Mammary epithelial cell (primary cell): ENCODE measurements at regions of chr17 and their contacts with region 1.

Region 1: GRCh38 chr17:47949136-47949759 is 7.9 kb downstream of the PNPO start:
- DNase-seq: peak; percentile 86
- H3K4me3 ChIP-seq: peak overlapping the region in 1 of 3 experiments; percentile 8
- H3K27ac ChIP-seq: peak overlapping the region; percentile 85
- H3K4me1 ChIP-seq: peaks cover 32% of the 10 kb centered on the region
- H3K27me3 ChIP-seq: no peaks in the 10 kb centered on the region
- CTCF ChIP-seq: peak; percentile 83 to 93

Region 2: GRCh38 chr17:47895856-47896671 is 53.2 kb before region 1 on chr17 and contains the start of gene SP2:
- CTCF ChIA-PET with region 1: interaction called, 5 read pairs
- dilution Hi-C with region 1: no loop called
- in situ Hi-C with region 1: no loop called
- intact Hi-C with region 1: loop called (anchors 1 kb)
- DNase-seq: peak; percentile 100
- H3K4me3 ChIP-seq: peak within 1 kb of the TSS; percentile 86 to 97 (median 91)
- H3K27ac ChIP-seq: peak within 1 kb of the TSS; percentile 85
- H3K4me1 ChIP-seq: peaks cover 29% of the 10 kb centered on the region
- H3K27me3 ChIP-seq: no peaks in the 10 kb centered on the region
- CTCF ChIP-seq: no peak
- total RNA-seq, gene SP2: 1.5 to 14.9 TPM

Region 3: DNA sequence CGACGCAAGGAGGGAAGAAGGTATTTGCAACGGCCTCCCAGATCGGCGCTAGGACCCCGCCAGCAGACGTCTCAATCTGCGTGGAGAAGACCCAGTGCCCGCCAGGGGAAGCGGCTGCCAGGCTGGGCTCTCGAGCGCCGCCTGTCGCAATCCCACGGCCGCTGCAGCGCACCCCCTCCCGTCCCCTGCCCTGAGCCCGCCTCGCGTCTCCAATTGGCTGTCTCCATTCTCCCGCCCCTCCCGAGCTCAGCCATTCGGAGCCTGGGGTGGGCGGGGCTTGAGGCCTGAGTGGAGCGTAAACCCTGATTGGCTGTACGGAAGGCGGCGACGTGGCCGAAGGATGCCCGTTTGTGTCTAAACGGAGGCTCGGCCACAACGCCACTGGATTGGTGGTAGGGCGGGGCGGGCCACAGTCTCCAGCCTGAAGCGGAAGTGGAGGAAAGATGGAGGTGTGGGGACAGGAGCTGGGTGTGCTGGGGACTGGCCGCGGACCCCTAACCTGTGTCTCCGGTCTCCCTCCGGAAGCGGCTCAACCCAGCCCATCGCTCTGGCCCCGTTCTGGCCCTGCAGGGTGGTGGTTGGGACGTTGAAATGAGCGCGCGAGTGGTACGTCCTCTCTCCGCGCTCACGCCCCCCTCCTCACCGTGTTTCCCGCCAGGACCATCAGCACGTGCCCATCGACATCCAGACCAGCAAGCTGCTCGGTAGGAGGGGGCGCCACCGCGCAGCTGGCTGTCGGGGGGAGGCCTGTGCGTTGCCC is 21.6 kb after region 1 on chr17 and contains the start of gene CDK5RAP3:
- CTCF ChIA-PET with region 1: interaction called, 14 read pairs
- dilution Hi-C with region 1: no loop called
- in situ Hi-C with region 1: no loop called
- intact Hi-C with region 1: loop called (anchors 1 kb)
- DNase-seq: peak; percentile 99
- H3K4me3 ChIP-seq: peak within 1 kb of the TSS; percentile 49 to 98 (median 78)
- H3K27ac ChIP-seq: peak within 1 kb of the TSS; percentile 60
- H3K4me1 ChIP-seq: peaks cover 27% of the 10 kb centered on the region
- H3K27me3 ChIP-seq: no peaks in the 10 kb centered on the region
- CTCF ChIP-seq: peak; percentile 72 to 93
- total RNA-seq, gene CDK5RAP3: 35.3 to 116 TPM

Region 4: DNA sequence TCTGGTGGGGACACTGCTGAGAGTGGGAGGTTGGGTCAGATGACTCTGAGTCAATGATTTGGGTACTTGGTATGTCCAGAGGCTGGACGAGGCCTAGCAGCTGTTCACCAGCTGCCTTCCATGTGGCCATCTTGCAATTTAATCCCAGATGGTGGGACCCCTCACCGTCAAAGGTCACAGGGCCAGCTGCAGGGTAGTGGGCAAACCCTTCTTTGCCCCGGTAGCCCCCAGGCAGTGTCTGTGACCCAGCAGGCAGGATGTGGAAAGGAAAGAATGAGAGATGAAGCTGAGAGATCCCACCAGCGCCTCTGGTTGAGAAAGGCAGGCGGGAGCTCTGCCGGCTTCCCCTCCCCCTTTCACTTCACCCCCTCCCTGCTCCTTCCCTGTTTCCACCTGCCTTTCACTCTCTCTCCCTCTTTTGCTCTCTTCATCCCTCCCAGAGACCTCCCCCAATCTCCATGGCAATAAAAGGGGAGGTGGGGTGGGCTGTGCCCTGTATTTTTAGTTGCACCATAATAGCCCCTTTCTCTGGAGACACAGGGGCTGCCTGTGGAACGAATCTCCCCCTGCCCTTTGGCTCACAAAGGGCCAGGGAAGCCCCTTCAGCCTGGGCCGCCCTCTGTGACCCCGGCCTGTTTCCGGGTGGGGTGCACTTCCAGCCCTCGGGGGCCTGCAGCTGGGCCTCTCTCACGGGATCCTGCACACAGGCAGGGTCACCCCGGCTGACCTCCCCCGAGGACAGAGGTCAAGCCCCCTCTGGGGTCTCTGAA is 41.9 kb after region 1 on chr17:
- CTCF ChIA-PET with region 1: no interaction called
- dilution Hi-C with region 1: loop called (anchors 5 kb)
- in situ Hi-C with region 1: no loop called
- intact Hi-C with region 1: no loop called
- DNase-seq: no peak
- H3K4me3 ChIP-seq: no peak overlapping the region
- H3K27ac ChIP-seq: no peak overlapping the region
- H3K4me1 ChIP-seq: no peaks in the 10 kb centered on the region
- H3K27me3 ChIP-seq: no peaks in the 10 kb centered on the region
- CTCF ChIP-seq: no peak

Region 5: GRCh38 chr17:48030531-48030930 is 81.3 kb after region 1 on chr17:
- CTCF ChIA-PET with region 1: no interaction called
- dilution Hi-C with region 1: loop called (anchors 5 kb)
- in situ Hi-C with region 1: no loop called
- intact Hi-C with region 1: no loop called
- DNase-seq: no peak
- H3K4me3 ChIP-seq: no peak overlapping the region
- H3K27ac ChIP-seq: no peak overlapping the region
- H3K4me1 ChIP-seq: peaks cover 17% of the 10 kb centered on the region
- H3K27me3 ChIP-seq: no peaks in the 10 kb centered on the region
- CTCF ChIP-seq: no peak

Region 6: GRCh38 chr17:48054238-48055185 is 105.3 kb after region 1 on chr17:
- CTCF ChIA-PET with region 1: no interaction called
- dilution Hi-C with region 1: no loop called
- in situ Hi-C with region 1: no loop called
- intact Hi-C with region 1: no loop called
- DNase-seq: peak; percentile 93
- H3K4me3 ChIP-seq: peak overlapping the region; percentile 8 to 87 (median 23)
- H3K27ac ChIP-seq: peak overlapping the region; percentile 51
- H3K4me1 ChIP-seq: peaks cover 55% of the 10 kb centered on the region
- H3K27me3 ChIP-seq: no peaks in the 10 kb centered on the region
- CTCF ChIP-seq: no peak